Gastrocnemius medialis (tissue), 4 donors: ENCODE measurements at regions of chr2 and their contacts with region 1.

Region 1: GRCh38 chr2:187429989-187430388 is 18.1 kb downstream of the CALCRL start:
- DNase-seq: no peak
- ATAC-seq: peak in 1 of 2 donors; percentile 69
- H3K4me3 ChIP-seq: no peak overlapping the region
- H3K27ac ChIP-seq: peak overlapping the region in 1 of 4 donors; percentile 12
- H3K4me1 ChIP-seq: peaks cover 0 to 7% of the 10 kb centered on the region in 2 donors
- H3K27me3 ChIP-seq: no peaks in the 10 kb centered on the region
- CTCF ChIP-seq: no peak
- POLR2A ChIP-seq: no peak

Region 2: DNA sequence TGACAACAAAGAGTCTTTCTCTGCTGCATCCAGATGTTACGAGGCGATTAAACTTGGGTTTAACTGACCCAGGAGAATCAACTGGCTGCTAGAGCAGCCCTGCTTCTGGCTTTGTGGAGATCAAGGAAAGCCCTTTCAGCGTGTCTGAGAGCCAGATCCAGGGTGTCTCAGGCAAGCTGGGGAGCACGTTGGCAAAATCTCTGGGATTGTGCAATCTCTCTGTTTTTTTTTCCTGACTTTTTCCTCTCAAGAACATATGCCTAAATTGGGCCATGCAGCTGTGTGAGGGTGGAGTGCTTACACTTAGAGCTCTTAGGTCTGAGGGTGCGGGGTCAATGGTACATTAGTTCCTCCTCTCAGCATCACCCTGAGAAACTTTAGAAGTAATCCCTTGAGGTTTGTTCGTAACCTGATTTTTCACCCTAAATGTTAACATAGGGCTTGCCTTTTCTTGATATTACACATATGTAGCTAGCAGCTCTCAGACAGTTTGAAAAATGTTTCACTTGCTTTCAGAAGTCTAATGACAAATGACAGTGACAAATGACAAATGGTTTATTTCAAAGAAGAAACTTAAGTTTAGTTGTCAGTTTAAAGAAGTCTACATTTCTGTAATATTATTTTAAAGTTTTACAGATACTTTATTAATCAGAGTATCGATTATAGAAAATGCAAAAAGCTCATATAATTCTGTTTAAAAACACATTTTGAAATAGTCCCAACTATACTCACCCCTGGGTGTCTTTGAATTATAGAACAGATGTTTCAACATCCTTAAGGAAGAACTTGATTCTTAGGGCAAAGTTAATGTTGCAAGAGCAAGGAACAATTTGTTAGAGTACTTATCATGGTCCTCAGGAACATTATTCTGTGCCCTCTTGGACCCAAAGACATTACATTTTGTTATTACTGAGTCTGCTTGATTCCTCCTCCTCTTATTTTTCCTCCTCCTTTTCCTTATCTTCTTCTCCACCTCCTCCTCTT is 542.6 kb before region 1 on chr2:
- in situ Hi-C with region 1: loop called in 1 of 4 experiments (anchors 25 kb)
- intact Hi-C with region 1: no loop called
- DNase-seq: peak; percentile 52 to 71
- ATAC-seq: peak; percentile 76 to 78
- H3K4me3 ChIP-seq: no peak overlapping the region
- H3K27ac ChIP-seq: peak overlapping the region; percentile 26 to 58 (median 40)
- H3K4me1 ChIP-seq: peaks cover 3 to 20% of the 10 kb centered on the region in 2 donors
- H3K27me3 ChIP-seq: no peaks in the 10 kb centered on the region
- CTCF ChIP-seq: no peak
- POLR2A ChIP-seq: no peak

Region 3: GRCh38 chr2:187497858-187498463 is 68.0 kb after region 1 on chr2:
- in situ Hi-C with region 1: no loop called
- intact Hi-C with region 1: no loop called
- DNase-seq: no peak
- ATAC-seq: no peak
- H3K4me3 ChIP-seq: no peak overlapping the region
- H3K27ac ChIP-seq: no peak overlapping the region
- H3K4me1 ChIP-seq: peaks cover 0 to 6% of the 10 kb centered on the region in 2 donors
- H3K27me3 ChIP-seq: no peaks in the 10 kb centered on the region
- CTCF ChIP-seq: peak in 2 of 5 experiments; percentile 27 to 41
- POLR2A ChIP-seq: no peak